Endothelial cell of umbilical vein (primary cell): ENCODE measurements at regions of chr15 and their contacts with region 1.

Region 1: DNA sequence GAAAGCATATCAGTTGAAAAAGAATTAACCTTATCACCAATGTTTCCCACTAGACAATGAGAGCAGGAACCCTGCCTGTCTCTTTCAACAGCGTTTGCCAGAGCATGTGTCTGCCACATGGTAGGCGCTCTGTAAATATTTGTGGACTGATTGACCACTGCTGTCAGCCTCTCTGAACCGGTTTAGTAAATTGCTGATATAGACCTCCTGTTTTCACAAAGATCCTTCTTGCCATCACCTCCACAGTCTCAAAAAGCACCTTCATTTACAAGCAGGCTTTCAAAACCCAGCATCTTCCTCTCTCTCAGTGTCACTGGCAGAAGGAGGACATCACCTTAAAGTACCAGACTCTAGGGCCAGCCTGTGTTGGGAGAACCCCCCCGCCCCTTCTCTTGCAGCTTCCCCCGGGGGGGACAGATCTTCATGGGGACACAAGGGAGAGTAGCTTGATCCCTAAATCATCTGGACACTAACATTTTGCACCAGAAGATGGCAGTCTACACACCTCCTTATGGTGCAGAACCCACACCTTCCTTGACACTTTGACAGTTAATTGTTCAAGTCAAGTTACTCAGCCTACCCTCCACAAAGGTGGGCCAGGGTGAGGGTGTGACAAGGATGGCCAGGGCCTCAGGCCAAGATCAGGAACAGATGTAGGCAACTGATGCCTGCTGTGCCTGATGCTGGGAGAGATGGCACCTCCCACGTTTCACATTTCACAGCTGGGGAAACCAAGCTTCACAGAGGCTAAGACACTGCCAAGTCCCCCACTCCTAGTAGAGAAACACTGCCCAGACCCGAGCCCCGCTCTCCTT is 37.8 kb upstream of the USP3 start:
- DNase-seq: peak; percentile 77
- H3K4me3 ChIP-seq: no peak overlapping the region
- H3K27ac ChIP-seq: no peak overlapping the region
- H3K4me1 ChIP-seq: peaks cover 8% of the 10 kb centered on the region
- H3K27me3 ChIP-seq: no peaks in the 10 kb centered on the region
- CTCF ChIP-seq: peak; percentile 54 to 63
- POLR2A ChIP-seq: no peak

Region 2: DNA sequence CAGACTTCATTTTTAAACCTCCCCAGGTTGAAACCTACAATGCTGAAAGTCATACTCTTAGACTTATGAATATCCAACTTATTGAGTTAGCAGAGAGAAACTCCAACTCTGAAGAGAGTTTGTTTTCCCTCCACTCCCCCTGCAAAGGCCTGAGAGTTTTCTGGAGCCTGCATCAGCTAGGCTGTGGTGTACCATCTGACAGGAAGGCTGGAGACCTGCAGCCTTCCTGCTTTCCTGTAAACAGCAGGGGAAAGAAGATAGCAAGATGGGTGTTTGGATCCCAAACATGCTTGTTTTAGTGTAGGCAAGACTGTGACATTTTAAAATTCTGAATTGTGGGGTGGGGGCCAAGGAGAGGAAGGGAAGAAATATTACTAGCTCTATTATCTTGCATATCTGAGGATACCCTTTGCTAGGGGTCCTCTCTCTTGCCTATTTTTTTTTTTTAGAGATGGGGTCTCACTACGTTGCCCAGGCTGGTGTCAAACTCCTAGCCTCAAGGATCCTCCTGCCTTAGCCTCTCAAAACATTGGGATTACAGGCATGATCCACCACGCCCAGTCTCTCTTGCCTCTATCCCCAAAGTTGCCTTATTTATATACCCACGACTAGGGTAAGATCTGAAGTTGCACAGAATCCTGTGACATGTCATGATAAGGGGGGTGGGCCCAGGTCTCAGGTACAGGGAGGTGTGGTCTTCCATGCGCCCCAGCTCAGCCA is 13.2 kb before region 1 on chr15:
- CTCF ChIA-PET with region 1: interaction called, 11 read pairs
- POLR2A ChIA-PET with region 1: no interaction called
- dilution Hi-C with region 1: no loop called
- intact Hi-C with region 1: no loop called
- DNase-seq: peak; percentile 60
- H3K4me3 ChIP-seq: no peak overlapping the region
- H3K27ac ChIP-seq: no peak overlapping the region
- H3K4me1 ChIP-seq: no peaks in the 10 kb centered on the region
- H3K27me3 ChIP-seq: peaks cover 0 to 2% of the 10 kb centered on the region in 2 experiments
- CTCF ChIP-seq: no peak
- POLR2A ChIP-seq: no peak

Region 3: DNA sequence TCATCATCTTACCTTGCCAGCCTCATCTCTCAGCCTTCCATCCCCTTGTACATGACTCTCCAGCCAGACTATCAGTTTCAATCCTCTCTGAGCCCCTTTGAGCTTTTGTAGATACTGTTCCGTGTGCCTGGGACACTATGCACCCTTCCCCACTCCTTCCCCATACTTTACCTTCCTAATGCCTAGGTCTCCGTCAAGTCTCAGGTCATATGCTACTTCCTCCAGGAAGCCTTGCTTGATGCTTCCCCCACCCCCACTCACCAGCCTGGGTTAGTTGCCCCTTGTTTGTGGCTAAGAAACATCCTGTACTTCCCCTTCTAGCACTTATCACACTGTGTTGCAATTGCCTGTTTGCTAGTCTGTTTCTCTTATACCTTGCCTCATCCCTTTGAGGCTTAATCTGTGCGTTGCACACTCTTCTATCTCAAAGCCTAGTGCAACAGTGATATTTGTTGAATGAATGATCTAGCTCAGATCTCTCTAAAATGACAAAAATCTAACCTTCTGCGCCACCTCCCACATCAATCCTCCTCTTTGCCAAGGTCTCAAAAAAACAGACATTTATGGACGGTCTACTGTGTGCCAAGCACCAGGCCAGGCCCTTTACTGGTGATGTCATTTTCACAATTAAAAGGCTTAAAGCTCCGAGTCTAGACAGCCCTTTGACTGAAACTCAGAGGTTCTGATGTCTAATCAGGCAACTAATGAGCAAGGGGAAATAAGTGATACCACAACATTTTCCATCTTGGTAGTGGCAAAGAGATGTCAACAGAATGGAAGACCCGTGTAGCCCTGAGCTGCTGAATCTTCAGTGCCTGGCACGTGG is 31.3 kb after region 1 on chr15:
- CTCF ChIA-PET with region 1: interaction called, 71 read pairs
- POLR2A ChIA-PET with region 1: no interaction called
- dilution Hi-C with region 1: no loop called
- intact Hi-C with region 1: loop called (anchors 2 kb)
- DNase-seq: no peak
- H3K4me3 ChIP-seq: no peak overlapping the region
- H3K27ac ChIP-seq: no peak overlapping the region
- H3K4me1 ChIP-seq: peaks cover 19% of the 10 kb centered on the region
- H3K27me3 ChIP-seq: peaks cover 4 to 5% of the 10 kb centered on the region in 2 experiments
- CTCF ChIP-seq: no peak
- POLR2A ChIP-seq: no peak

Region 4: DNA sequence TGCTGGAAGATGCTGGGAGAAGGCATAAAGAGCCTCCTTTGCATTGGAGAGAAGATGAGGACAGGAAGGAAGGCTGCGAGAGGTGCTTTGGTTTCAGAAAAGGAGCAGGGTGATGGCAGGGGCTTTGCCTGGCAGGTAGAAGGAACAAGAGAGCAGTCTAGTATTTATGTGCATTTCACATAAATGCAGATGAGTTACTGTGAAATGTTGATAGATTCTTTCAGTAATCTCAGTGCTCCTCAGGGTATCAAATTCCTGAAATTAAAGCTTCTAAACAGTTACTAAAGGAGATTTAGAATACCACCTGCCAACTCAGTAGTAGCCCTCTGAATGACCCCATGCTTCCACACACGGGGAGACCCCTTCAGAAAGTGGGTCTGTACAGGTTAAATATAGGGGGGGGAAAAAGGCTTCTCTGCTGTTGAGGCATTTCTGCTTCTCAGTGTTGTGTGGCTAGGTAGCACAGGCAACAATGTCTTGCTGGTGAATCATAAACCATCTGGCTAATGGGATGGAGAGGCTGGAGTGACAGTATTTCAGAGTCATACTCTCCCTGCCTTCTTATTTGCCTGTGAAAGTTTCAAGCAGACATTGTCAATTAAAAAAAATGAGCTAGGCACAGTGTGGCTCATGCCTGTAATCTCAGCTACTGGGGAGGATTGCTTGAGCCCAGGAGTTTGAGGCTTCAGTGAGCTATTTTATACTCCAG is 116.3 kb after region 1 on chr15:
- CTCF ChIA-PET with region 1: interaction called, 5 read pairs
- POLR2A ChIA-PET with region 1: no interaction called
- dilution Hi-C with region 1: no loop called
- intact Hi-C with region 1: loop called (anchors 5 kb)
- DNase-seq: no peak
- H3K4me3 ChIP-seq: no peak overlapping the region
- H3K27ac ChIP-seq: no peak overlapping the region
- H3K4me1 ChIP-seq: no peaks in the 10 kb centered on the region
- H3K27me3 ChIP-seq: no peaks in the 10 kb centered on the region
- CTCF ChIP-seq: no peak
- POLR2A ChIP-seq: no peak

Region 5: DNA sequence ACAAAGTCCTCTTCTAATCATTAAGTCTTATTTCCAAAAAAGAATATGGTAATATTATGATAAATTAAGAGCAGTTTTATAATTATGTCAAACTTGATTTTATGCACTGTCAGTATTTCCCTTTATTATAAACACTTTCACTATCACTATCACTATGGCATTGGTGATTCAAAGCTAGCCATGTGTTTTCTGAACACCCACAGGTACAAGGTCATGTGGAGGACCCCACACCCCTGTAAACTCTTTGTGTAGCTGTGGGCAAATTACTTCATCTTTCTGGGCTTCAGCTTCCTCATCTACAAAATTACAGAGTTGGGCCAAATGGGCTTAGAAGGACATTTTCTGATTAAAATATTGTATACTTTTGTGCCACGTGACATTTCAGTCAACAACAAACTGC is 172.3 kb after region 1 on chr15:
- CTCF ChIA-PET with region 1: interaction called, 19 read pairs
- POLR2A ChIA-PET with region 1: no interaction called
- dilution Hi-C with region 1: no loop called
- intact Hi-C with region 1: no loop called
- DNase-seq: no peak
- H3K4me3 ChIP-seq: no peak overlapping the region
- H3K27ac ChIP-seq: no peak overlapping the region
- H3K4me1 ChIP-seq: peaks cover 4% of the 10 kb centered on the region
- H3K27me3 ChIP-seq: no peaks in the 10 kb centered on the region
- CTCF ChIP-seq: no peak
- POLR2A ChIP-seq: no peak

Region 6: GRCh38 chr15:63763476-63764123 is 297.0 kb after region 1 on chr15:
- CTCF ChIA-PET with region 1: no interaction called
- POLR2A ChIA-PET with region 1: no interaction called
- dilution Hi-C with region 1: no loop called
- intact Hi-C with region 1: no loop called
- DNase-seq: no peak
- H3K4me3 ChIP-seq: no peak overlapping the region
- H3K27ac ChIP-seq: no peak overlapping the region
- H3K4me1 ChIP-seq: no peaks in the 10 kb centered on the region
- H3K27me3 ChIP-seq: no peaks in the 10 kb centered on the region
- CTCF ChIP-seq: no peak
- POLR2A ChIP-seq: no peak